Transverse colon (tissue), 4 donors: ENCODE measurements at regions of chr4 and their contacts with region 1.

Region 1: GRCh38 chr4:107037199-107037584 is 1.1 kb upstream of the DKK2 start:
- DNase-seq: peak; percentile 8
- H3K4me3 ChIP-seq: peak overlapping the region in 1 of 4 donors; percentile 48
- H3K27ac ChIP-seq: no peak overlapping the region
- H3K4me1 ChIP-seq: peaks cover 0 to 24% (median 15%) of the 10 kb centered on the region in 4 donors
- H3K27me3 ChIP-seq: peaks cover 78% of the 10 kb centered on the region
- CTCF ChIP-seq: peak; percentile 13 to 35 (median 23)
- EP300 ChIP-seq: no peak
- POLR2A ChIP-seq: no peak

Region 2: DNA sequence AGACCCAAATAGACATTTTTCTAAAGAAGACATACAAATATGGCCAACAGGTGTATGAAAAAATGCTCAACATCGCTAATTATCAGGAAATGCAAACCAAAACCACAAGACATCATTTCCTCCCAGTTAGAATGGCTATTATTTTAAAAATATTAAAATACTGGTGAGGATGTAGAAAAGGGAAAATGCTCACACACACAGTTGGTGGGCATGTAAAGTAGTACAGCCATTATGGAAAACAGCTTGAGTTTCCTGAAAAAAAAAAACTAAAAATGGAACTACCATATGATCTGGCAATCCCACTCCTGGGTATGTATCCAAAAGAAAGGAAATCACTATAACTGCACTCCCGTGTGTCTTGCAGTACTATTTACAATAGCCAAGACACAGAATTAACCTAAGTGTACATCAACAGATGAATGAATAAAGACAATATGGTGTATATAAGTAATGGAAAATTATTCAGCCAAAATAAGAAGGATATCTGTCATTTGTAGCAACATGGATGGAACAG is 127.8 kb after region 1 on chr4:
- in situ Hi-C with region 1: no loop called
- intact Hi-C with region 1: no loop called
- DNase-seq: no peak
- H3K4me3 ChIP-seq: no peak overlapping the region
- H3K27ac ChIP-seq: no peak overlapping the region
- H3K4me1 ChIP-seq: no peaks in the 10 kb centered on the region
- H3K27me3 ChIP-seq: no peaks in the 10 kb centered on the region
- CTCF ChIP-seq: no peak
- EP300 ChIP-seq: no peak
- POLR2A ChIP-seq: no peak

Region 3: DNA sequence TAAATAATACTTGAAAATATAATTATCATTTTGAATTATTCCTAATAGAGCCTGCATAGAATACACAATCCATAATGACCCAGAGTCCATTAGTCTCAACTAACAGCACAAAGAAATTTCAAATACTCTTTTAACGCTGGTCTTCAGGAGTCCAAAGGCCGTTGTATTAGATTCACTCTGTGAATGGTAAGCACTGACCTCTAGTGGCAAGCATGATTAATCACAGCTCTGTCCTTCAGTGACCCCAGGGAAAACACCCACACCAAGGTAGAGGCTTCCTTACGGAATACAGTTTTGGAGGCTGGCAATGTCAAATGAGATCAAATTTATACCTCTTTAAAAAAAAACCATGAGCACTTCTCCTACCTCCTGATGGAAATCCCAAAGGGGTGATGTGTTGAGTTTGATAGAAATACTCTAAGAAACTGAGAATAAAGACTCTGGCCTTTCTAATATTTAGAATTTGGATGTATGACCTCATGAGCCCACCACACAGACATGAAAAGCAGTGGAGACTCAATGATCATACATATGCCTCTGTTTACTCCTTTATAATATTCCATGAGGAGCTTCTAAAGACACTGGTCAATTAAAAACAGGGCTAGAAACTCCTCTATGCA is 146.1 kb after region 1 on chr4:
- in situ Hi-C with region 1: no loop called
- intact Hi-C with region 1: loop called (anchors 10 kb)
- DNase-seq: no peak
- H3K4me3 ChIP-seq: no peak overlapping the region
- H3K27ac ChIP-seq: no peak overlapping the region
- H3K4me1 ChIP-seq: no peaks in the 10 kb centered on the region
- H3K27me3 ChIP-seq: no peaks in the 10 kb centered on the region
- CTCF ChIP-seq: peak; percentile 66 to 77 (median 72)
- EP300 ChIP-seq: no peak
- POLR2A ChIP-seq: no peak

Region 4: GRCh38 chr4:107666134-107666533 is 628.9 kb after region 1 on chr4:
- in situ Hi-C with region 1: loop called in 1 of 4 experiments (anchors 25 kb)
- intact Hi-C with region 1: no loop called
- DNase-seq: no peak
- H3K4me3 ChIP-seq: no peak overlapping the region
- H3K27ac ChIP-seq: peak overlapping the region in 1 of 4 donors; percentile 32
- H3K4me1 ChIP-seq: peaks cover 0 to 13% (median 0%) of the 10 kb centered on the region in 4 donors
- H3K27me3 ChIP-seq: no peaks in the 10 kb centered on the region
- CTCF ChIP-seq: peak in 3 of 5 experiments; percentile 27 to 46 (median 32)
- EP300 ChIP-seq: no peak
- POLR2A ChIP-seq: no peak

Region 5: GRCh38 chr4:108700081-108700757 is 1663.0 kb after region 1 on chr4:
- in situ Hi-C with region 1: no loop called
- intact Hi-C with region 1: no loop called
- DNase-seq: no peak
- H3K4me3 ChIP-seq: no peak overlapping the region
- H3K27ac ChIP-seq: no peak overlapping the region
- H3K4me1 ChIP-seq: no peaks in the 10 kb centered on the region
- H3K27me3 ChIP-seq: no peaks in the 10 kb centered on the region
- CTCF ChIP-seq: no peak
- EP300 ChIP-seq: no peak
- POLR2A ChIP-seq: no peak